Activated CD4-positive, alpha-beta T cell treated with anti-CD3 and anti-CD28 coated beads for 36 hours (primary cell): ENCODE measurements at regions of chr12 and their contacts with region 1.

Region 1: DNA sequence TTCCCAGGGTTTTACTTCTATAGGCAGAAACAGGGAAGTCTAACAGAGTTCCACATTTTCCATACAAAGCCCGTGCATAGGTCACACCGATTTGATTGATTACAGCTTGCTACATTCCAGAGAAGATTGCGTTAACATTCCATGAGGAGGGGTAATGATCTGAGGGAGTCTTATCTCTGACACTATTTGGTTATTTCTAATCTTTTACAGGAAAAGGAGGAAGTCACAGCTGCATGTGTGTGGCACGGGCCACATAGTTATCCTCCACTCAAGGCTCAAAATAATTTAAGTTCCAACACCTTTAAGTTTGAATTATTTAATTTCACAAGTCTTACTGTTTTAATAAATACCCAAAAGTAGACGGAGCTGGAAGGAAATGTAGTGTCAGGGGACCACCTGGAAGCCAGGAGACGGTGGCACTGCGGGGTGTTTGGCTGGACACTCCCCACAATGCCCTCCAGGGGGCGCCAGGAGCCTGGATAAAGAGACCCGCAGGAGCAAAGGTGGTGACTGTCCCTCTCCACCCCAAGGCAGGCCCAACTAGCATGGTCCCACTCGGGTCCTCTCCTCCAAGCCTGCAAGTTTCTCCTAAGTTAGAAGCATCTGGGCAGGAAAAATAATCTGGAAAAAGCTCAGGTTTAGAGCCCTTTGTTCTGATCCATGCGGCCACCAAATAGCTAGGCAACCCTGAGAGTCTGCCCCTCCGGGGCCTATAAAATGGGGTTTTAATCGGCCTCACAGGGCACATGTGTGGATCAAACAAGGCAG is 20.2 kb downstream of the KRT8 start:
- DNase-seq: peak; percentile 90
- ATAC-seq: peak; percentile 90
- H3K4me3 Mint-ChIP-seq: no peak overlapping the region
- H3K27ac Mint-ChIP-seq: no peak overlapping the region
- H3K4me1 Mint-ChIP-seq: peaks cover 7% of the 10 kb centered on the region
- H3K27me3 Mint-ChIP-seq: peaks cover 5% of the 10 kb centered on the region

Region 2: DNA sequence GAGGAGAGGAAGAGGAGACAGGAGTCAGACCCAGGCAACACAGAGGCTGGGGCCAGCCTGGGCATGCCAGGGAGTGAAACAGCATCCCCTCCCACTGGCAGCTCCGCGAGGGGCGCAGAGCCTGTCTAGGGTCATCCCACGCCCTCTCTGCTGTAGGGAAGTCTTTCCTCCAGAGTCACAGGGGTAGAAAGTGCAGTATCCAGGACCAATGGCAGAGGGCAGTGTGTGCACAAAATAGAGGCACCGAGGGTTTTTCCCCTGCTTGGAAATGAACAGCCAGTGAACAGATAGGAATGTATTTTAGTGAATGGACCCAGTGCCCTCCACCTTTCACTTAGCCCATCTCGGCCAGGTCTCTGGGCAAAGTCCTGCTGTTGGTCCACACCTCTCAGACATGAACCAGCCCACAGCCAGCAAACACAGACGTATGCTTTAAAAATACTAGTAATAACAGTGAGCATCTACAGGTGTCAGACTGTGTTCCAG is 301.7 kb before region 1 on chr12:
- CTCF ChIA-PET with region 1: interaction called, 70 read pairs
- POLR2A ChIA-PET with region 1: no interaction called
- intact Hi-C with region 1: loop called (anchors 1 kb)
- DNase-seq: peak; percentile 80
- ATAC-seq: peak; percentile 78
- H3K4me3 Mint-ChIP-seq: no peak overlapping the region
- H3K27ac Mint-ChIP-seq: no peak overlapping the region
- H3K4me1 Mint-ChIP-seq: peaks cover 51% of the 10 kb centered on the region
- H3K27me3 Mint-ChIP-seq: no peaks in the 10 kb centered on the region

Region 3: GRCh38 chr12:52754135-52754534 is 130.6 kb before region 1 on chr12:
- CTCF ChIA-PET with region 1: no interaction called
- POLR2A ChIA-PET with region 1: no interaction called
- intact Hi-C with region 1: no loop called
- DNase-seq: no peak
- ATAC-seq: no peak
- H3K4me3 Mint-ChIP-seq: no peak overlapping the region
- H3K27ac Mint-ChIP-seq: no peak overlapping the region
- H3K4me1 Mint-ChIP-seq: peaks cover under 1% of the 10 kb centered on the region
- H3K27me3 Mint-ChIP-seq: no peaks in the 10 kb centered on the region

Region 4: GRCh38 chr12:52924764-52925716 is 40.3 kb after region 1 on chr12:
- CTCF ChIA-PET with region 1: interaction called, 11 read pairs
- POLR2A ChIA-PET with region 1: no interaction called
- intact Hi-C with region 1: no loop called
- DNase-seq: no peak
- ATAC-seq: no peak
- H3K4me3 Mint-ChIP-seq: no peak overlapping the region
- H3K27ac Mint-ChIP-seq: no peak overlapping the region
- H3K4me1 Mint-ChIP-seq: no peaks in the 10 kb centered on the region
- H3K27me3 Mint-ChIP-seq: no peaks in the 10 kb centered on the region

Region 5: DNA sequence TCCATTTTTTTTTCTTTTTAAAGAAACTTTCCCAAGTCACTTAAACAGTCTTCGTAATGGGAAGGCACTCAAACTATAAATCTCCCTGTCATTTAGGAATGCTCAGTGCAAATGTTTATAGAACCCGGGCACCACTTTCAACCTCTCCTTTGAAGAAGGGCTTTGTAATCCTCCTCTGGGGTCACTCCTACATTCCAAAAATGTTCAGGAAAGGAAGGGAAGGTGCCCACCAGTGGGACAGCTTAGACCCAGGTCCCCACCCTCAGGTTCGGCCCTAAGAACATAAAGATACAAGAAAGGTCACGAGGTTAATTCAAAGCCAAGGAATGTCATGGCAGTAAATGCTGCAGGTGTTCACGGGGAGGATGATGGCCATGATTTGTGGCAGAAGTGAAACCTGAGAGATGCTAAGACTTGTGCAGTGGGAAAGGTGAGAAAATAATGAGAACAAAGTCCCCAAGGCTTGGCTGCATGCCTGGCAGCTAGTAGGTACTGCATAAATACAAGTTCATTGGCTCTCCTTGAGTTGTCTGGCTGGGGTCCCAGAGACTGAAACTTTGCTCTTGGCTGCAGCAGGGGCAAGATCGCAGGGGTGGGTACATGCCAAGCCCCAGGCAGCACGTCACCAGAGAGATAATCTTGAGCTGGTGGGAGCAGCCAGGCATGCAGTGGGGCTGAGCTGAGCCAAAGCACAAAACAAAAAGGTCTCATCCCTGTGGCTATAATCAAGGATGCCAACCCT is 85.3 kb after region 1 on chr12:
- CTCF ChIA-PET with region 1: interaction called, 40 read pairs
- POLR2A ChIA-PET with region 1: no interaction called
- intact Hi-C with region 1: no loop called
- DNase-seq: no peak
- ATAC-seq: no peak
- H3K4me3 Mint-ChIP-seq: no peak overlapping the region
- H3K27ac Mint-ChIP-seq: no peak overlapping the region
- H3K4me1 Mint-ChIP-seq: no peaks in the 10 kb centered on the region
- H3K27me3 Mint-ChIP-seq: peaks cover 7% of the 10 kb centered on the region

Region 6: GRCh38 chr12:53098982-53099651 is 214.4 kb after region 1 on chr12:
- CTCF ChIA-PET with region 1: interaction called, 6 read pairs
- POLR2A ChIA-PET with region 1: no interaction called
- intact Hi-C with region 1: loop called in 1 of 2 experiments (anchors 1 kb)
- DNase-seq: peak; percentile 95
- ATAC-seq: peak; percentile 59
- H3K4me3 Mint-ChIP-seq: peak overlapping the region; percentile 72
- H3K27ac Mint-ChIP-seq: peak overlapping the region; percentile 89
- H3K4me1 Mint-ChIP-seq: peaks cover 43% of the 10 kb centered on the region
- H3K27me3 Mint-ChIP-seq: peaks cover 12% of the 10 kb centered on the region

Region 7: DNA sequence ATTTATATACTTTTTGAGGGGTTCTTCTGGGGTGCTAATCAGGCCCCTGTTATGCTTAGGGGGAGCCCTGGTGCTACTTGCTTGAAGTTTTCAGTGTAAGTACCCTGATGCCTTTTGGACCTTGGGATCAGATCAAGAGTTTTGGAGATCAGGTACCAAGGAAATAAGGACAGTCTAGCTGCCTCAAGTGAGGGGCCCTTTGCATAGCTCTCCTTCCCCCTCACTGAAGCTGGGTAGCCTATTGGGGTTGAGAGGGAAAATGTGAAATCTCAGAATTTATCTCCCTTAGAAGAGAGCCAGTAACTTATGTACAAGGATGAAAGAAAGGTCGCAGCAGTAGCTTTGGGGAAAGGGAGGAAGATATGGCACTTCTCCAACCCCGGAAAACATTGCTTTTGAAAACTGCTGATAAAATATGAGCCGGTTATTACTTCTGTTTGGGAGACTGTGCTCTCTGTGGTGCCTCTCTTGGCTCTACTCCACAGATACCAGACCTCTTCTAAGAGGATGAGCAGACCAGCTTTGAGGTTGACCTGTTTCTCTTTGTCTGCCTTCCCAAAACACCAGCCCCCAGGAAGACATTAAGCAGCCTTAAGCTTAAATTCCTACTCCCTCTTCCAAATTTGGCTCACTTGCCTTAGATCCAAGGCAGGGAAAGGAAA is 530.2 kb after region 1 on chr12:
- CTCF ChIA-PET with region 1: no interaction called
- POLR2A ChIA-PET with region 1: no interaction called
- intact Hi-C with region 1: no loop called
- DNase-seq: no peak
- ATAC-seq: no peak
- H3K4me3 Mint-ChIP-seq: no peak overlapping the region
- H3K27ac Mint-ChIP-seq: no peak overlapping the region
- H3K4me1 Mint-ChIP-seq: peaks cover 66% of the 10 kb centered on the region
- H3K27me3 Mint-ChIP-seq: no peaks in the 10 kb centered on the region